A673 (cell line): ENCODE measurements at regions of chrX and their contacts with region 1.

Region 1: GRCh38 chrX:25020905-25021449 is 5.2 kb upstream of the ARX start:
- DNase-seq: peak; percentile 73
- H3K4me3 ChIP-seq: peak overlapping the region; percentile 52
- H3K27ac ChIP-seq: no peak overlapping the region
- H3K4me1 ChIP-seq: peaks cover 44% of the 10 kb centered on the region
- H3K27me3 ChIP-seq: no peaks in the 10 kb centered on the region
- CTCF ChIP-seq: peak; percentile 87

Region 2: DNA sequence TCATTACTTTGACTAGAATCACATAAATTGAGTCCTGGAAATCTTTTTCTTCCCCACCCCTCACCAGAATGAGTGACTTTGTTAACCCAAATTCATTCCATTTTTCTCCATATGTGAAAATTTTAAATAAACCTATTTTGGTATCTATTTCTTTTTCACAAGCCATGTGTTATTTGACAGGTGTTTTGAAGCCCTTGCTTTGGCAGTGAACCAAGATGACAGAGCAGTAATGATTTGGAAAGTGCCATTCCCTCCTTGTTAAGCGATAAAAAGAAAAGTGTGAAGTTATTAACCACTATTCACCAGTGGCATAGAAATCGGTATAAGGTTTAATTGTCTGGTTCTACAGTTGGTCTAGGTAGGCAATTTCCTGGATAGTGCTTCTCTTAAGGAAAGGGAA is 261.2 kb before region 1 on chrX:
- CTCF ChIA-PET with region 1: no interaction called
- POLR2A ChIA-PET with region 1: no interaction called
- intact Hi-C with region 1: loop called (anchors 5 kb)
- DNase-seq: no peak
- H3K4me3 ChIP-seq: no peak overlapping the region
- H3K27ac ChIP-seq: no peak overlapping the region
- H3K4me1 ChIP-seq: peaks cover 5% of the 10 kb centered on the region
- H3K27me3 ChIP-seq: no peaks in the 10 kb centered on the region
- CTCF ChIP-seq: no peak

Region 3: DNA sequence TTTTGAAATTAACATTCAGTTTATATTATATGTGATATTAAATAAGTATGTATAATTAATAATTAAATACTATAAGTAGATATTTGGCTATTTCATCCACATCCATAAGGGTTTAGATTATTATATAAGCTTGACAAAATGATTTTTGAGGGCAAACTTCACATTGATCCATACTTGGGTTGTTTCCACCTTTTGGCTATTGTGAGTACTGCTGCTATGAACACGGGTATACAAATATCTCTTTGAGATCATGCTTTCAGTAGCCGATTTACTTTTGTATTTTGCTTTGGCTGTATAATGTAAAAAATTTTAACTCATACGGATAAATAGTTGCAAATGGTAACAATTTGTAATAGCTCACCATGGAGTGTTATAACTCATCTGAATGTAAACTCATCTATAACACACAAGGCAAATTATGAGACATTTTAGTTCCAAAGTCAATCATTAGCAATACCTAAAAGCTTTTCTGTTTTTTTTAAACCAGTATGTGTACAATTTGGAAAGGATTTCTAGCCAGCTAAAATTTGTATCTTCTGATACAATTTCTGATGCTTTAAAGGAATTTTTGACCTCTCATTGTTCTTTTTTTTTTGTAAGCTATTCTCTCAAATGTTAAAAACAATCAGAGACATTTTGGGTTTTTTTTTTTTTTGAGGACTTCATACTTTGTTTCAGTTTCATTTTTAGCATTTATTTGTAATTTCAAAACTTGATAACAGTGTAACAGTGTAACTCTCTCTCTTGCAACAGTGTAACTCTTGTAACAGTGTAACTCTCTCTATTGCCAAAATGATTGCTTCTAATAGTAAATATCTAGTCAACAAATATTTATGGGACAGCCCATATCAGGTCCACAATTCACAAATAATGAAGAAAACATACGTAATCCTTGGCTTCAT is 46.5 kb after region 1 on chrX:
- CTCF ChIA-PET with region 1: no interaction called
- POLR2A ChIA-PET with region 1: interaction called, 3 read pairs
- intact Hi-C with region 1: loop called (anchors 5 kb)
- DNase-seq: peak; percentile 74
- H3K4me3 ChIP-seq: no peak overlapping the region
- H3K27ac ChIP-seq: peak overlapping the region; percentile 97
- H3K4me1 ChIP-seq: peaks cover 50% of the 10 kb centered on the region
- H3K27me3 ChIP-seq: no peaks in the 10 kb centered on the region
- CTCF ChIP-seq: peak; percentile 39; the same call in 1 of the 2 replicates